Heart right ventricle (tissue), 16 donors: ENCODE measurements at regions of chr16 and their contacts with region 1.

Region 1: DNA sequence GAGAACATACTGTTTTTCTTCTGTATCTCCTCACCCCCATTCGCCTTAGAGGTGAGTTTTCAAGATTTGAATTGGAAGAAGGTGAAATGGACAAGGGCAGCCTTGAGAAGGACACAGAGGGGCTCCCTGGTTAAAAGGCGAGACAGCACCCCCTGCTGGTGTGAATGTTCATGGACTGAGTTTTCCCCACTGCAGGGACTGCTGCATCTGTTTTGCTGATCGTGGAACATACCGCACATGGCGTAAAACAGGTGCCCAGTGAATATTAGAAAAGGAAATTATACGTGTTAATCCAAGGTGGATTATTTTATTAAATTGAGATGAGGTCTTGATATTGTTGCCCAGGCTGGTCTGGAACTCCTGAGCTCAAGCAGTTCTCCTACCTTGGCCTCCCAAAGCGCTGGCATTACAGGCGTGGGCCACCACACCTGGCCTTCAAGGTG is 54.5 kb downstream of the NDE1 start:
- DNase-seq: peak; percentile 68 to 81
- ATAC-seq: peak; percentile 57 to 91 (median 84)
- H3K4me3 ChIP-seq: no peak overlapping the region
- H3K27ac ChIP-seq: no peak overlapping the region
- H3K4me1 ChIP-seq: peaks cover 0 to 14% (median 0%) of the 10 kb centered on the region in 9 donors
- H3K27me3 ChIP-seq: no peaks in the 10 kb centered on the region
- CTCF ChIP-seq: peak; percentile 63 to 87 (median 83)

Region 2: DNA sequence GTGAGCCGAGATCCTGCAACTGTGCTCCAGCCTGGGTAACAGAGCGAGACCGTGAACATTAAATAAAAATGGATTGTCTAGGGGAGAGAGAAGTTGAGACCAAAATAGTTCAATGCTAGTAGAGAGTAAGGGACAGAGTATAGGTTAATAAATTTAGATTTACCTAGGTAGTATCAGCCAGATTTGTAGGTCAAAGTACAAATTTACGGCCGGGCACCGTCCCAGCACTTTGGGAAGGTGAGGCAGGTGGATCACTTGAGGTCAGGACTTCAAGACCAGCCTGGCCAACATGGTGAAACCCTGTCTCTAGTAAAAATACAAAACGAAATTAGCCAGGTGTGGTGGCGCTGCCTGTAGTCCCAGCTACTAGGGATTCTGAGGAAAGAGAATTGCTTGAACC is 282.3 kb before region 1 on chr16:
- intact Hi-C with region 1: loop called in 8 of 10 experiments (anchors 5 to 10 kb)
- DNase-seq: no peak
- ATAC-seq: no peak
- H3K4me3 ChIP-seq: no peak overlapping the region
- H3K27ac ChIP-seq: no peak overlapping the region
- H3K4me1 ChIP-seq: no peaks in the 10 kb centered on the region
- H3K27me3 ChIP-seq: no peaks in the 10 kb centered on the region
- CTCF ChIP-seq: no peak

Region 3: DNA sequence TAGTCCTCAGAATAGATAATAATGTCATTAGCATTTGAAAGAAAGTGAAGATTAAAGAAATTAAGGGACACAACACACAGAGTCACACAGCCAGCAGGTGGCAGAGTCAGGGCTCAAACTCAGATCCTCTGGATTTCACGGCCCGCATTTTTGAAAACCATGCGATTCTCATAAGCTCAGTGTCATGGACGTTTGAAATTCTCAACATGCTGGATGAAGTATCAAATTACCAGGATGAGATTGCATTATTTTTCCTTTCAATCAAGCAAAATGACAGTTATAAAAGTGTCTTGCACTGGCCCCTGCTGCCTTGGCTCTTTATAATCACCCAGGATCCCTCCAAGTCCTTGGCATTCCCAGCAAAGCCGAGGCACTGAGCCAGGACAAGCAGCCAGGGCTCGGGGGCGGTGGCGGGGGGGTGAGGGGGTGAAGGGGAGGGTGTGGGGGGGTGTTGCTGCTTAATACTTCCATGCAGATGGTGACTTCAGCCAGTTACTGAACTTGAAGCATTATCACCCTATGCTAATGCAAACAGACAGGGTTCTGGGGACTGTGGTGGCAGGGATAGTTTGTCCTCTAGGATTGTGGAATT is 276.8 kb before region 1 on chr16:
- intact Hi-C with region 1: loop called in 8 of 10 experiments (anchors 5 to 10 kb)
- DNase-seq: peak; percentile 73 to 77
- ATAC-seq: peak; percentile 87 to 94 (median 90)
- H3K4me3 ChIP-seq: peak overlapping the region in 3 of 10 donors; percentile 10 to 39 (median 25)
- H3K27ac ChIP-seq: peak overlapping the region in 5 of 10 donors; percentile 23 to 60 (median 44)
- H3K4me1 ChIP-seq: peaks cover 0 to 11% (median 4%) of the 10 kb centered on the region in 9 donors
- H3K27me3 ChIP-seq: no peaks in the 10 kb centered on the region
- CTCF ChIP-seq: peak; percentile 37 to 82 (median 66)

Region 4: GRCh38 chr16:15518390-15519351 is 185.9 kb before region 1 on chr16:
- intact Hi-C with region 1: loop called in 1 of 10 experiments (anchors 10 kb)
- DNase-seq: peak; percentile 27 to 28
- ATAC-seq: peak in 7 of 8 donors; percentile 32 to 75 (median 43)
- H3K4me3 ChIP-seq: no peak overlapping the region
- H3K27ac ChIP-seq: peak overlapping the region in 4 of 10 donors; percentile 20 to 31 (median 30)
- H3K4me1 ChIP-seq: peaks cover 0 to 54% (median 16%) of the 10 kb centered on the region in 9 donors
- H3K27me3 ChIP-seq: no peaks in the 10 kb centered on the region
- CTCF ChIP-seq: no peak

Region 5: DNA sequence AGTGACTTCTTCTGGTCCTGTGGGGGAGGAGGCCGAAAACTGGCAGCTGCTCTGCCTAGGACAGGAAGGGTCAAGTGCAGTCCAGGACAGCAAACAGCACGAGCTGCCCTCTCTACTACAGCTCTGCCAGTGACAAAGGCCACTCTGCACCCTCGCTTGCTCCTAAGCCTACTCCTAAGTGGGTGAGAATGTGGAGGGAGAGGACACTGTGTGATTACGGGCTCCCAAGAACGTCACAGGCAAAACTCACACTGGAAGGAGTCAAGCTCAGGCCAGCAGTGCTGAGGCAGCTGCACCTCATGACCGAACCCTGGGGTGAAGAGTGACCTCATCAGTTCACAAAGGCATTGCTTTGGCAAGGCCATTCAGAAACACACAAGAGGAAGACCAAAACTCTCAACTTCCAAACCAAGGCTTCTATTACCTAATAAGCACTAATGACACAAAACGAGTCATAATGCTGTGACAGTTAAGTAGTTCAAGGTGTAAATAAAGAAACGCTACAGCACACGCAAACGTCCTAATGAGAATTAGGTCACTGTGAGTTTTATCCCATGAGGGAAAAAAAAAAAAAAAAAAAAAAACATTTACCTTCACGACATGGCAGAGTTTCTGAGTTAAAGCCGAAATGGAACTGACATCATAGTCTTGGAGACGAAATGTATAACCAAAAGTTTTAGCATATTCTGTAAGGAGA is 96.7 kb before region 1 on chr16:
- intact Hi-C with region 1: loop called in 1 of 10 experiments (anchors 10 kb)
- DNase-seq: peak; percentile 57 to 65
- ATAC-seq: peak; percentile 75 to 98 (median 90)
- H3K4me3 ChIP-seq: no peak overlapping the region
- H3K27ac ChIP-seq: peak overlapping the region; percentile 30 to 81 (median 60)
- H3K4me1 ChIP-seq: peaks cover 0 to 22% (median 12%) of the 10 kb centered on the region in 9 donors
- H3K27me3 ChIP-seq: no peaks in the 10 kb centered on the region
- CTCF ChIP-seq: no peak

Region 6: GRCh38 chr16:15643048-15643945 is 61.3 kb before region 1 on chr16 and contains the start of gene MARF1:
- intact Hi-C with region 1: loop called in 5 of 10 experiments (anchors 2 to 10 kb)
- DNase-seq: peak; percentile 99 to 100
- ATAC-seq: peak; percentile 97 to 99 (median 98)
- H3K4me3 ChIP-seq: peak within 1 kb of the TSS; percentile 65 to 97 (median 85)
- H3K27ac ChIP-seq: peak within 1 kb of the TSS; percentile 87 to 100 (median 99)
- H3K4me1 ChIP-seq: peaks cover 0 to 32% (median 26%) of the 10 kb centered on the region in 9 donors
- H3K27me3 ChIP-seq: no peaks in the 10 kb centered on the region
- CTCF ChIP-seq: peak; percentile 27 to 77 (median 52)
- total RNA-seq, gene MARF1: 39.1 to 59.1 (median 43.0) TPM

Region 7: DNA sequence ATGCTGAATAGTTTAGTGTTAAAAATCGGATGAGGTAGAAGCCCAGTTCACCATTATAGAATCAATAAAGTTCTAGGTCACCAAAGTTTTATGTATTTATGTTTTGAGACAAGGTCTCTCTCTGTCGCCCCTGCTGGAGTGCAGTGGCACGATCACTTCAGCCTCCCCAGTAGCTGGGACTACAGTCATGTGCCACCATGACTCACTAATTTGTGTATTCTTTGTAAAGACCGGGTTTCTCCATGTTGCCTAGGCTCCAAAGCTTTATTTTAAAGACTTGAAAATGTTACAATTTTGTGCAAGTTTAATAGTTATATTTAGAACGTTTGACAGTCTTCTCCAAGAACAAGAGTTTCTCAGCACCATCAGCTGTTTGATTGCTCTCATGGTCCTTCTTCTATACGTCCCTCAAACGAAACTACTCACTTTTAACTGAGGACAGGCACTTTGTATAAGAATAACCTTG is 22.4 kb before region 1 on chr16:
- intact Hi-C with region 1: loop called in 1 of 10 experiments (anchors 2 kb)
- DNase-seq: no peak
- ATAC-seq: peak in 1 of 8 donors; percentile 51
- H3K4me3 ChIP-seq: no peak overlapping the region
- H3K27ac ChIP-seq: no peak overlapping the region
- H3K4me1 ChIP-seq: no peaks in the 10 kb centered on the region
- H3K27me3 ChIP-seq: no peaks in the 10 kb centered on the region
- CTCF ChIP-seq: peak in 7 of 9 donors; percentile 6 to 54 (median 26)